Pancreas (tissue), 10 donors: ENCODE measurements at regions of chr1 and their contacts with region 1.

Region 1: GRCh38 chr1:6245086-6245868 is 1.3 kb downstream of the HES3 start:
- DNase-seq: peak; percentile 66 to 96 (median 88)
- ATAC-seq: peak; percentile 89 to 93 (median 92)
- H3K4me3 ChIP-seq: peak overlapping the region in 1 of 4 donors; percentile 2
- H3K27ac ChIP-seq: no peak overlapping the region
- H3K4me1 ChIP-seq: peaks cover 0 to 10% (median 0%) of the 10 kb centered on the region in 3 donors
- H3K27me3 ChIP-seq: peaks cover 0 to 47% (median 10%) of the 10 kb centered on the region in 4 donors
- CTCF ChIP-seq: peak; percentile 50 to 68 (median 61)

Region 2: DNA sequence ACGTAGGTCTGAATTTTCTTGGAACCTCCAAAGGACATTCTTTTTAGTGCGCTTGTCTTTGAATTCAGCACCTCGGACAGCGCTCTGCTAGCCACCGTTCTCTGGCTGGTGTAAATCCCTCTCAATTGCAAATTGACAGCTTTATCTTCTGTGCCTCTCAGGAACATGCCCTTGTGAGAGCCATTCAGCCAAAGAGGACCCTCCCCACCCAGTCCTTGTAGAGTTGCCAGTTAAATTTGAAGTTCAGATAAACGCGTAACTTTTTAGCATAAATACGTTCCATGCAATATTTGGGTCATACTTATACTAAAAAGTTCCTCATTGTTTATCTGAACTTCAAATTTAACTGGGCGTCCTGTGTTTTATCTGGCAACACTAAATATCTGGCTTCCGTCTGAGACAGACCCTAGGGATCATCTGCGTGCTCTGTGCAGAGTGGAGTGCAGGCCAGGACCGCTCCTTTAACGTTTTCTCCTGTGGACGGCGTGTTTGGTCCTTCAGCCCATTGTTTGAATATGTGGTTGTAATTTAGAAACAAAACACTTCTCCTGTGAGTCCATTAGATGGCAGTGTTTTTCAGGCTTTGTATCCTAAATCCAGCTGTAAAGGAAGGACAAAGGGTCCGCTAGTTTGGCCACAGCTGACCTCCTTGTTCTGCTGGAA is 192.6 kb before region 1 on chr1:
- intact Hi-C with region 1: loop called in 1 of 3 experiments (anchors 10 kb)
- DNase-seq: peak in 4 of 6 donors; percentile 27 to 79 (median 63)
- ATAC-seq: peak in 3 of 4 donors; percentile 60 to 84 (median 82)
- H3K4me3 ChIP-seq: no peak overlapping the region
- H3K27ac ChIP-seq: no peak overlapping the region
- H3K4me1 ChIP-seq: no peaks in the 10 kb centered on the region
- H3K27me3 ChIP-seq: no peaks in the 10 kb centered on the region
- CTCF ChIP-seq: peak in 1 of 4 donors; percentile 25

Region 3: GRCh38 chr1:6065093-6065858 is 180.0 kb before region 1 on chr1:
- intact Hi-C with region 1: no loop called
- DNase-seq: no peak
- ATAC-seq: no peak
- H3K4me3 ChIP-seq: no peak overlapping the region
- H3K27ac ChIP-seq: no peak overlapping the region
- H3K4me1 ChIP-seq: no peaks in the 10 kb centered on the region
- H3K27me3 ChIP-seq: no peaks in the 10 kb centered on the region
- CTCF ChIP-seq: no peak

Region 4: GRCh38 chr1:6343506-6344405 is 98.5 kb after region 1 on chr1:
- intact Hi-C with region 1: loop called in 2 of 3 experiments (anchors 5 to 10 kb)
- DNase-seq: peak in 4 of 6 donors; percentile 40 to 78 (median 59)
- ATAC-seq: peak; percentile 64 to 89 (median 82)
- H3K4me3 ChIP-seq: no peak overlapping the region
- H3K27ac ChIP-seq: no peak overlapping the region
- H3K4me1 ChIP-seq: no peaks in the 10 kb centered on the region
- H3K27me3 ChIP-seq: no peaks in the 10 kb centered on the region
- CTCF ChIP-seq: peak; percentile 25 to 68 (median 41)

Region 5: DNA sequence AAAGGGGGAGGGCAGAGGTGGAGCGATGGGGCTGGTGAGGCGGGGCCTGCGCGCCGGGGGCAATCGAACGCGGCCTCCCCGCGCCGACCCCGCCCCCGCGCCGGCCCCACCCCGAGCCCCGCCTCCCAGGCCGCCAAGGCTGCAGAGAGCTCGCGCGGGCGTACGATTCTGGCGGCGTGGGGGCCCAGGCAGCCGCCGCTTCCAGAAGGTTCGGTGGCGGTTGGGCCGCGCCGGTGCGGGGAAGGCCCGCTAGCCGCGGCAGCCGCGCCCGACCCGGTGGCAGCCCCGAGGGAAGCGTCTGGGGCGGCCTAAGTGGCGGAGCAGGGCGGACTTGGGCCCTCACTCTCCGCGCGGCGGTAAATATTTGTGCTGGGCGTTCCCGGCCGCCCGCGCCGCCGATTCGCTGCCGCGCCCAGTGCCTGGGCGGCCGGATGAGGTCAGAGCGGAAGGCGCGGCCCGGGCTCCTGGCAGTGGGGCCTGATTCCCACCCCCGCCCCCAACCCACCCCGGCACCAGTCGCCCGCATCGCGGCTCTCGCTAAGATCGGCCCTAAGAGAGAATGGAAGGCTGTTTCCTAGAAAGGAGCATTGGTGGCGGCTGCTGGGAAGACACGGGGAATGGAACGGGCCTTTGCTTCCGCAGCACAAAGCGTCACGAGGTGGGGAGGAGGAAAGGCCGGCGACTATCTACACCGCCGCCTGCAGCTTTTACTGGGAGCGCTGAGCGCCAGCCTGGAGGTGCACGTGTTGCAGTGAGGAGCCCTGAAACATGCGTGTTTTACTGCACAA is 148.3 kb after region 1 on chr1 and contains the start of gene ACOT7:
- intact Hi-C with region 1: no loop called
- DNase-seq: peak; percentile 86 to 94 (median 91)
- ATAC-seq: peak; percentile 94 to 98 (median 97)
- H3K4me3 ChIP-seq: peak within 1 kb of the TSS; percentile 31 to 57 (median 52)
- H3K27ac ChIP-seq: peak within 1 kb of the TSS; percentile 99
- H3K4me1 ChIP-seq: peaks cover 9 to 15% (median 10%) of the 10 kb centered on the region in 3 donors
- H3K27me3 ChIP-seq: no peaks in the 10 kb centered on the region
- CTCF ChIP-seq: no peak
- total RNA-seq, gene ACOT7: 3.1 to 7.6 (median 5.2) TPM

Region 6: GRCh38 chr1:6409053-6409452 is 163.8 kb after region 1 on chr1:
- intact Hi-C with region 1: loop called in 2 of 3 experiments (anchors 5 kb)
- DNase-seq: no peak
- ATAC-seq: no peak
- H3K4me3 ChIP-seq: no peak overlapping the region
- H3K27ac ChIP-seq: no peak overlapping the region
- H3K4me1 ChIP-seq: no peaks in the 10 kb centered on the region
- H3K27me3 ChIP-seq: no peaks in the 10 kb centered on the region
- CTCF ChIP-seq: no peak